A673 (cell line): ENCODE measurements at regions of chr5 and their contacts with region 1.

Region 1: GRCh38 chr5:116068028-116068632 is 16.7 kb upstream of the COMMD10 start:
- DNase-seq: peak; percentile 55
- H3K4me3 ChIP-seq: no peak overlapping the region
- H3K27ac ChIP-seq: no peak overlapping the region
- H3K4me1 ChIP-seq: no peaks in the 10 kb centered on the region
- H3K27me3 ChIP-seq: peaks cover 5% of the 10 kb centered on the region
- CTCF ChIP-seq: peak; percentile 84

Region 2: GRCh38 chr5:115702025-115702424 is 366.1 kb before region 1 on chr5:
- CTCF ChIA-PET with region 1: no interaction called
- POLR2A ChIA-PET with region 1: no interaction called
- intact Hi-C with region 1: no loop called
- DNase-seq: peak; percentile 41
- H3K4me3 ChIP-seq: no peak overlapping the region
- H3K27ac ChIP-seq: no peak overlapping the region
- H3K4me1 ChIP-seq: no peaks in the 10 kb centered on the region
- H3K27me3 ChIP-seq: peaks cover 38% of the 10 kb centered on the region
- CTCF ChIP-seq: no peak

Region 3: GRCh38 chr5:115841382-115842088 is 226.6 kb before region 1 on chr5 and contains the starts of genes AP3S1 and ATG12:
- CTCF ChIA-PET with region 1: no interaction called
- POLR2A ChIA-PET with region 1: no interaction called
- intact Hi-C with region 1: loop called (anchors 5 kb)
- DNase-seq: peak; percentile 97
- H3K4me3 ChIP-seq: peak within 1 kb of the TSS; percentile 80
- H3K27ac ChIP-seq: peak within 1 kb of the TSS; percentile 89
- H3K4me1 ChIP-seq: peaks cover 22% of the 10 kb centered on the region
- H3K27me3 ChIP-seq: no peaks in the 10 kb centered on the region
- CTCF ChIP-seq: no peak
- total RNA-seq, gene AP3S1: 66.9 and 71.8 TPM in 2 replicates
- total RNA-seq, gene ATG12: 55.8 and 59.6 TPM in 2 replicates

Region 4: DNA sequence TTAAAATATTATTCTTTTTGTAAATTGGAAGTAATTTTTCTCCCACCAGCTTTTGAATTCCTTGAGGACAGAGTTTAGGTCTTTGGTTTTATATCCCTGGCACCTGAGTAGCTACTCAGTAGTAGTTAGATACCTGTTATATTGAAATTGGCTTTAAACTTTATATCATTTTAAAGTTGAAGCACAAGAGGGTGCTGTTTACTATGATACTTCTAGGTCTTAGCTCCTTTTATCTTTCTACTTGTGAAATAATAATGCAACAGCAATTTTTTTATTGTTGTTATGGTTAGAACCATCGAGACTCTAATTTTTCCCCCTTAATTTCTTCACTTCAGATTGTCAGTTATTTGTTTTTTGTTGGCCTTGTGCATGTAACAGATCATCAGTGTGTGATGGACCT is 180.1 kb before region 1 on chr5:
- CTCF ChIA-PET with region 1: interaction called, 4 read pairs
- POLR2A ChIA-PET with region 1: no interaction called
- intact Hi-C with region 1: loop called (anchors 2 kb)
- DNase-seq: peak; percentile 8
- H3K4me3 ChIP-seq: no peak overlapping the region
- H3K27ac ChIP-seq: no peak overlapping the region
- H3K4me1 ChIP-seq: no peaks in the 10 kb centered on the region
- H3K27me3 ChIP-seq: no peaks in the 10 kb centered on the region
- CTCF ChIP-seq: no peak; the same call in 1 of the 2 replicates

Region 5: GRCh38 chr5:116115163-116115562 is 47.0 kb after region 1 on chr5:
- CTCF ChIA-PET with region 1: no interaction called
- POLR2A ChIA-PET with region 1: no interaction called
- intact Hi-C with region 1: no loop called
- DNase-seq: no peak
- H3K4me3 ChIP-seq: no peak overlapping the region
- H3K27ac ChIP-seq: no peak overlapping the region
- H3K4me1 ChIP-seq: no peaks in the 10 kb centered on the region
- H3K27me3 ChIP-seq: no peaks in the 10 kb centered on the region
- CTCF ChIP-seq: no peak